ENCODE measurements at regions of chr1 and their contacts with region 1.

Region 1: GRCh38 chr1:103525607-103526507 is at the start of gene RNPC3:
- DNase-seq: peak; percentile 95
- H3K4me3 Mint-ChIP-seq: peak within 1 kb of the TSS; percentile 100
- H3K27ac Mint-ChIP-seq: peak within 1 kb of the TSS; percentile 99
- H3K4me1 Mint-ChIP-seq: peaks cover 38% of the 10 kb centered on the region
- H3K27me3 Mint-ChIP-seq: peaks cover 3% of the 10 kb centered on the region
- total RNA-seq, gene RNPC3: 18.7 and 20.7 TPM in 2 replicates

Region 2: GRCh38 chr1:103333181-103333580 is 192.7 kb before region 1 on chr1:
- intact Hi-C with region 1: no loop called
- DNase-seq: no peak
- H3K4me3 Mint-ChIP-seq: no peak overlapping the region
- H3K27ac Mint-ChIP-seq: no peak overlapping the region
- H3K4me1 Mint-ChIP-seq: no peaks in the 10 kb centered on the region
- H3K27me3 Mint-ChIP-seq: no peaks in the 10 kb centered on the region

Region 3: GRCh38 chr1:103365860-103366569 is 159.8 kb before region 1 on chr1:
- intact Hi-C with region 1: loop called (anchors 5 kb)
- DNase-seq: no peak
- H3K4me3 Mint-ChIP-seq: no peak overlapping the region
- H3K27ac Mint-ChIP-seq: peak overlapping the region; percentile 10
- H3K4me1 Mint-ChIP-seq: no peaks in the 10 kb centered on the region
- H3K27me3 Mint-ChIP-seq: no peaks in the 10 kb centered on the region

Region 4: GRCh38 chr1:103514920-103515503 is 10.8 kb before region 1 on chr1:
- intact Hi-C with region 1: loop called (anchors 1 kb)
- DNase-seq: peak; percentile 75
- H3K4me3 Mint-ChIP-seq: no peak overlapping the region
- H3K27ac Mint-ChIP-seq: no peak overlapping the region
- H3K4me1 Mint-ChIP-seq: peaks cover 16% of the 10 kb centered on the region
- H3K27me3 Mint-ChIP-seq: no peaks in the 10 kb centered on the region

Region 5: DNA sequence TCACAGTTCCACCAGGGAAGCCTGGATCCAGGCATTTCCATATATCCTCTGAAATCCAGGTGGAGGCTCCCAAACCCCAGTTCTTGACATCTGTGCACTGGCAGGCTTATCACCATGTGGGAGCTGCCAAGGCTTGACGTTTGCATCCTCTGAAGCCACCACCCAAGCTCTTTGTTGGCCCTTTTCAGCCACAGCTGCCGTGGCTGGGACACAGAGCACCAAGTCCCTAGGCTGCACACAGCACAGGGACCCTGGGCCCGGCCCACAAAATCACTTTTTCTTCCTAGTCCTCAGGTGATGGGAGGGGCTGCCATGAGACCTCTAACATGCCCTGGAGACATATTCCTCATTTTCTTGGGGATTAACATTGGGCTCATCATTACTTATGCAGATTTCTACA is 22.0 kb after region 1 on chr1:
- intact Hi-C with region 1: loop called (anchors 2 kb)
- DNase-seq: no peak
- H3K4me3 Mint-ChIP-seq: no peak overlapping the region
- H3K27ac Mint-ChIP-seq: no peak overlapping the region
- H3K4me1 Mint-ChIP-seq: no peaks in the 10 kb centered on the region
- H3K27me3 Mint-ChIP-seq: no peaks in the 10 kb centered on the region

Region 6: GRCh38 chr1:104072915-104073371 is 547.1 kb after region 1 on chr1:
- intact Hi-C with region 1: no loop called
- DNase-seq: no peak
- H3K4me3 Mint-ChIP-seq: no peak overlapping the region
- H3K27ac Mint-ChIP-seq: no peak overlapping the region
- H3K4me1 Mint-ChIP-seq: no peaks in the 10 kb centered on the region
- H3K27me3 Mint-ChIP-seq: no peaks in the 10 kb centered on the region

Measured in activated CD4-positive, alpha-beta T cell treated with anti-CD3 and anti-CD28 coated beads, Interleukin-2, amount 10 ng/mL, durations not matched to agents 24 days and 14 days (primary cell).